Activated CD4-positive, alpha-beta T cell treated with anti-CD3 and anti-CD28 coated beads for 36 hours (primary cell): ENCODE measurements at regions of chr22 and their contacts with region 1.

Region 1: GRCh38 chr22:28442264-28442710 is 237.4 kb downstream of the TTC28 start:
- DNase-seq: peak; percentile 89
- ATAC-seq: peak; percentile 92
- H3K4me3 Mint-ChIP-seq: peak overlapping the region; percentile 77
- H3K27ac Mint-ChIP-seq: peak overlapping the region; percentile 86
- H3K4me1 Mint-ChIP-seq: peaks cover 27% of the 10 kb centered on the region
- H3K27me3 Mint-ChIP-seq: peaks cover 6% of the 10 kb centered on the region

Region 2: DNA sequence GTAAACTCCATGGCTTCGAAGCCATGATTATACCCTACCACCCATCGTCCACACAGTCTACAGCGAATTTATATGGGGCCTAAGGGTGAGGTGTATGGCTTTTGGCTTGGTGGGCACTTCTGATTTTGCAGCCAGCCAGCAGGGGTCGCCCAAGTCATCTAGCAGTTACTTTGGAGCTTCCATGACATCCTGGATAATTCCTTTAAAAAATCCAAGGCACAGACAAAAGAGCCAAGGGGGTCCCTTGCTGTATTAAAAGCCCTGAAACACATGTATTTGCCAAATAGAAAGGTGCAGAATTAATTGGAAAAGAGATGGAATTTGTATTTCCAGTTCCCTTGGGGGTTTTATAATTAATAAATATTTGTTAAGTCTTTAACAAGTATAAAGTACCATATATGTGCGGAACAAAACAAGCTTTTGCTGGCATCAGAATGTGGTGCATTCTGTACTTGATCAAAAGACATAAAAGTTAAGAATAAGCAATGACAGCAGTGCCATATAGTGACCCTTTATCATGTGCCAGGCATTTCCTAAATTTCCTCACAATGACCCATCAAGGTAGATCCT is 390.4 kb before region 1 on chr22:
- CTCF ChIA-PET with region 1: interaction called, 4 read pairs
- POLR2A ChIA-PET with region 1: no interaction called
- intact Hi-C with region 1: loop called (anchors 1 to 2 kb)
- DNase-seq: peak; percentile 65
- ATAC-seq: no peak
- H3K4me3 Mint-ChIP-seq: no peak overlapping the region
- H3K27ac Mint-ChIP-seq: no peak overlapping the region
- H3K4me1 Mint-ChIP-seq: no peaks in the 10 kb centered on the region
- H3K27me3 Mint-ChIP-seq: no peaks in the 10 kb centered on the region

Region 3: GRCh38 chr22:28297504-28297903 is 144.8 kb before region 1 on chr22:
- CTCF ChIA-PET with region 1: no interaction called
- POLR2A ChIA-PET with region 1: interaction called, 10 read pairs
- intact Hi-C with region 1: no loop called
- DNase-seq: no peak
- ATAC-seq: no peak
- H3K4me3 Mint-ChIP-seq: no peak overlapping the region
- H3K27ac Mint-ChIP-seq: no peak overlapping the region
- H3K4me1 Mint-ChIP-seq: peaks cover 10% of the 10 kb centered on the region
- H3K27me3 Mint-ChIP-seq: no peaks in the 10 kb centered on the region

Region 4: GRCh38 chr22:28594797-28595462 is 152.6 kb after region 1 on chr22:
- CTCF ChIA-PET with region 1: no interaction called
- POLR2A ChIA-PET with region 1: no interaction called
- intact Hi-C with region 1: loop called in 1 of 2 experiments (anchors 5 kb)
- DNase-seq: no peak
- ATAC-seq: peak; percentile 65
- H3K4me3 Mint-ChIP-seq: no peak overlapping the region
- H3K27ac Mint-ChIP-seq: no peak overlapping the region
- H3K4me1 Mint-ChIP-seq: no peaks in the 10 kb centered on the region
- H3K27me3 Mint-ChIP-seq: peaks cover 6% of the 10 kb centered on the region